ENCODE measurements at regions of chr2 and their contacts with region 1.

Region 1: GRCh38 chr2:100394111-100394641 is 23.3 kb downstream of the CHST10 start:
- DNase-seq: peak; percentile 55
- ATAC-seq: peak; percentile 84
- H3K4me3 ChIP-seq: peak overlapping the region; percentile 35; the same call in 1 of the 2 replicates
- H3K27ac ChIP-seq: peak overlapping the region; percentile 81
- H3K4me1 ChIP-seq: peaks cover 26% of the 10 kb centered on the region
- H3K27me3 ChIP-seq: no peaks in the 10 kb centered on the region
- CTCF ChIP-seq: no peak
- EP300 ChIP-seq: no peak
- POLR2A ChIP-seq: peak; percentile 72
- RAD21 ChIP-seq: no peak

Region 2: GRCh38 chr2:100161945-100162620 is 232.1 kb before region 1 on chr2:
- CTCF ChIA-PET with region 1: no interaction called
- POLR2A ChIA-PET with region 1: no interaction called
- RAD21 ChIA-PET with region 1: no interaction called
- SMC1A ChIA-PET with region 1: no interaction called
- in situ Hi-C with region 1: no loop called
- intact Hi-C with region 1: no loop called
- DNase-seq: no peak
- ATAC-seq: no peak
- H3K4me3 ChIP-seq: no peak overlapping the region
- H3K27ac ChIP-seq: no peak overlapping the region
- H3K4me1 ChIP-seq: no peaks in the 10 kb centered on the region
- H3K27me3 ChIP-seq: no peaks in the 10 kb centered on the region; a peak in 1 of 4 replicates
- CTCF ChIP-seq: no peak
- EP300 ChIP-seq: no peak
- POLR2A ChIP-seq: no peak
- RAD21 ChIP-seq: no peak

Region 3: GRCh38 chr2:100381240-100381639 is 12.9 kb before region 1 on chr2:
- CTCF ChIA-PET with region 1: interaction called, 46 read pairs
- POLR2A ChIA-PET with region 1: interaction called, 3 read pairs
- RAD21 ChIA-PET with region 1: interaction called, 16 read pairs
- SMC1A ChIA-PET with region 1: interaction called, 20 read pairs
- in situ Hi-C with region 1: no loop called
- intact Hi-C with region 1: no loop called
- DNase-seq: peak; percentile 60
- ATAC-seq: peak; percentile 97
- H3K4me3 ChIP-seq: no peak overlapping the region
- H3K27ac ChIP-seq: no peak overlapping the region
- H3K4me1 ChIP-seq: no peaks in the 10 kb centered on the region; the same call in 1 of the 2 replicates
- H3K27me3 ChIP-seq: no peaks in the 10 kb centered on the region; a peak in 1 of 4 replicates
- CTCF ChIP-seq: peak; percentile 85 to 90 (median 89)
- EP300 ChIP-seq: no peak
- POLR2A ChIP-seq: no peak
- RAD21 ChIP-seq: peak; percentile 85

Region 4: DNA sequence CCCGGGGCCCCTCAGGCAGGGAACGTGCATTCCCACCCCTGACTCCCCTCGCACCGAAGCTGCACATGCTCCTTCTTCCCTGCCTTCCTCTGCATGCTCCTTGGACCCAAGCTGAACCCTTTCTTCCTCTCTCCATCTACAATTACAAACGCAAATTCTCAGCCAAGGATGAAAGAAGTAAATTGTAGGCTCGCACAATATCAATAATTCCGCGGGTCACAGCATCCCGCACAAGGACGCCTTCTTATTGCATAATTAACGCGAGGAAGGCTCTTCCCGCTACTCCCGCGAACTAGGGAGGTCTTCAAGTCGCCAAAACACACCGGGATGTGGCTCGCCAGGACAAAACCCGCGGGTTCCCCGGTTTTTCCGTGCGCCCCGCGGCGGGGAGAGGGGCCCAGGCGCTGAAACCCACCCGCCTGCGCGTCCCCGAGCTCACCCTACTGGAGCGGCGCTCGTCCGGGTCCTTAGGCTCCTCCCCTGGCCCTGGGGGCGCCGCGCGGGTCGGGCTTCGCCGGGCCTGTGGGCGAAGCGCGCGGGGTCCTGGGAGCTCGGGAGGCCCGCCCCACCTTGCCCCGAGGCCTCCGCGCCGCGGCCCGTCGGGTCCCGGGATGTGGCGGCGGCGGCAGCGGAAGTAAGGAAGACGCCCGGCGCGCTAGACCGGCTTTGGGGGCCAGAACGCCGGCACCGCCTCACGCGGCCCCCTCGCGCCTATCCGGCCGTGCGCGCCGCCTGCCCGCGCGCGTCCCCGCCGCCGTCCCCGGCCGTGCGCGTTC is 22.9 kb after region 1 on chr2 and contains the start of gene CHST10:
- CTCF ChIA-PET with region 1: interaction called, 15 read pairs
- POLR2A ChIA-PET with region 1: interaction called, 22 read pairs
- RAD21 ChIA-PET with region 1: interaction called, 40 read pairs
- SMC1A ChIA-PET with region 1: interaction called, 20 read pairs
- in situ Hi-C with region 1: no loop called
- intact Hi-C with region 1: loop called (anchors 2 kb)
- DNase-seq: no peak
- ATAC-seq: peak; percentile 93
- H3K4me3 ChIP-seq: peak within 1 kb of the TSS; percentile 96
- H3K27ac ChIP-seq: peak within 1 kb of the TSS; percentile 47
- H3K4me1 ChIP-seq: peaks cover 3% of the 10 kb centered on the region; the same call in 1 of the 2 replicates
- H3K27me3 ChIP-seq: no peaks in the 10 kb centered on the region
- CTCF ChIP-seq: 0 out of 6 replicates have a peak, but pooled peaks of 1 of the 3 experiments have one; percentile 3
- EP300 ChIP-seq: no peak
- POLR2A ChIP-seq: peak; percentile 75
- RAD21 ChIP-seq: no peak
- polyA plus RNA-seq, gene CHST10: 2.0 to 2.4 TPM

Region 5: DNA sequence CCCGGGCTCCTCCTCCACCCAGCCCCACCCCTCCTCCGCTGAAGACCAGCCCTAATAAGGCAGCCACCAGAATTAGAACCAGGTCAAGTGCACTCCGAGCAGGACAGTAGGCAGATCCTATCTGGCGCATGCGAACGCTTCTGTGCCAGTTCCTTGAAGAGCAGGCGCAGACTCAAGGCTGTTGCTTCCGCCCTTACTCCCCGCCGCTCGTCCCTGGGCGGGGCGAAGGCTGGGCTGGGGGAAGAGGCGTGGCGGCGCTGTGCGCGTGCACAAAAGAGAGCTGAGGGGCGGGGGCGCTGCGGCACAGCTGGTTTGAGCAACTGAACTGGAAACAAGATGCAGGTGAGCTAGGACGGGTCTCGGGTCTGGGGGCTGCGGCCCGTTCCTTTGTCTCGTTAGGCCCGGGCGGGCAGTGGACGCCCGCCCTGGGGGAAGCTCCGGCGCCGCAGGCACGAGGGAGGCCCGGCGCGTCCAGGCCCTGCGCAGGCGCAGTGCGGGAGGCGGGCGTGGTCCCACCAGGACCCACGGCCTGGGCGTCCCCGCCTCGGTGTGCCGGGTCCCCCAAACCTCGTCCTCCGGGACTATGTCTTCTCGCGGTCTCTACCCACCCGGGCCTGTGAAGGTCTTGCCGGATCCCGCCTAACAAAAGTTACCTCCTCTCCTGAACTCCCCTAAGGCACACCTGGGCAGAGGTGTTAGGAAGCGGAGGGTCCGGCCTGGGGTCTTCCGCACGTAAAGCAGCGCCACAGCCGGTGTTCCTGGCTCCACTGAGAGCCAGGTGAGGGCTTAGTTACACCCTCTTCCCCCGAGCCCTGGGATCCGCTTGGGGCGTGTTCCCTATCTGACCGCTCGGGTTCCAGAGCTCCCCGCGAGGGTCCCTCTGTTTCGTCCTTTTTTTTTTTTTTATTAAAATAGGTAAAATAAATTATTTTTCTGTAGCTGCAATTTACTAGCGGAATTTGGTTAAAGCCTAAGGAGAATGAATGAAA is 168.8 kb after region 1 on chr2 and contains the start of gene PDCL3:
- CTCF ChIA-PET with region 1: no interaction called
- POLR2A ChIA-PET with region 1: interaction called, 3 read pairs
- RAD21 ChIA-PET with region 1: interaction called, 5 read pairs
- SMC1A ChIA-PET with region 1: no interaction called
- in situ Hi-C with region 1: no loop called
- intact Hi-C with region 1: loop called (anchors 2 kb)
- DNase-seq: peak; percentile 98
- ATAC-seq: peak; percentile 97
- H3K4me3 ChIP-seq: peak within 1 kb of the TSS; percentile 88
- H3K27ac ChIP-seq: peak within 1 kb of the TSS; percentile 92
- H3K4me1 ChIP-seq: peaks cover 4% of the 10 kb centered on the region
- H3K27me3 ChIP-seq: no peaks in the 10 kb centered on the region
- CTCF ChIP-seq: peak in 2 of 3 experiments; percentile 12 to 20; a peak in 2 of 6 replicates
- EP300 ChIP-seq: no peak
- POLR2A ChIP-seq: peak; percentile 81
- RAD21 ChIP-seq: no peak
- polyA plus RNA-seq, gene PDCL3: 109 to 111 TPM

Region 6: GRCh38 chr2:100645695-100646429 is 251.7 kb after region 1 on chr2:
- CTCF ChIA-PET with region 1: no interaction called
- POLR2A ChIA-PET with region 1: no interaction called
- RAD21 ChIA-PET with region 1: no interaction called
- SMC1A ChIA-PET with region 1: no interaction called
- in situ Hi-C with region 1: no loop called
- intact Hi-C with region 1: no loop called
- DNase-seq: no peak
- ATAC-seq: no peak
- H3K4me3 ChIP-seq: no peak overlapping the region
- H3K27ac ChIP-seq: no peak overlapping the region
- H3K4me1 ChIP-seq: no peaks in the 10 kb centered on the region
- H3K27me3 ChIP-seq: no peaks in the 10 kb centered on the region; a peak in 1 of 4 replicates
- CTCF ChIP-seq: no peak
- EP300 ChIP-seq: no peak
- POLR2A ChIP-seq: no peak
- RAD21 ChIP-seq: no peak

Measured in GM12878 (cell line).